ENCODE measurements at regions of chr15 and their contacts with region 1.

Region 1: DNA sequence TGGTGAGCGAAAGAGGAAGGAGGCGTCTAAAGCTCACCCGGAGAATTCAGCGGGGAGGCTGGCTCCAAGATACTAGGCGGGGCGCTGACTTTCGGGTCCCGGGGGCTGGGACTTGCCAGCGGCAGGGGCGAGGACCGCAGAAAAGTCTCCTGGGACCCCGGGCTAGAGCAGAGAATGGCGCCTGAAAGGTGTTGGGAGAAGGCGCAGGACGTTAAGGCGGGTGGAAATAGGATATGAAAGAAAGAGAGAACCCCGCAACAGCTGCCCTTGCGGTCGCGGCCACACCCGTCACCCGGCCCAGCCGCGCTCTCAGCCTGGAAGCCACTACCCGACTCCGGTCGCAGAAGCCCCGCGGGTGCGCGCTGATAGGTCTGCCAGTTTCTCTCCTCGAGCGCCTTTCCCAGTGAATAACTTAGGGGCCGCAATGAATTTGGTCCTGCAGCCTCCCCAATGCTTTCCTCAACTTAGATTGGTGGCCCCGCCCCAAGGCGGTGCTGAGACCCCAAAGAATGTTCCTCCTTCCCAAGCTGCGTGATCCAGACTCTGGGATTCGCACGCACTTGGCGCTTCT is 602 bp downstream of the LTK start:
- DNase-seq: peak; percentile 76
- ATAC-seq: peak; percentile 73
- H3K4me3 ChIP-seq: peak overlapping the region; percentile 34 to 76 (median 51)
- H3K4me3 Mint-ChIP-seq: peak overlapping the region; percentile 88
- H3K27ac ChIP-seq: no peak overlapping the region
- H3K27ac Mint-ChIP-seq: peak overlapping the region; percentile 71
- H3K4me1 ChIP-seq: peaks cover 30% of the 10 kb centered on the region in 2 donors
- H3K4me1 Mint-ChIP-seq: peaks cover 27% of the 10 kb centered on the region
- H3K27me3 ChIP-seq: peaks cover 0 to 27% (median 11%) of the 10 kb centered on the region in 4 experiments
- H3K27me3 Mint-ChIP-seq: peaks cover 6% of the 10 kb centered on the region
- CTCF ChIP-seq: no peak

Region 2: GRCh38 chr15:41501191-41501917 is 11.7 kb before region 1 on chr15:
- CTCF ChIA-PET with region 1: interaction called, 3 read pairs
- POLR2A ChIA-PET with region 1: interaction called, 3 read pairs
- intact Hi-C with region 1: loop called (anchors 1 kb)
- DNase-seq: peak; percentile 57
- ATAC-seq: peak; percentile 42
- H3K4me3 ChIP-seq: peak overlapping the region in 4 of 5 experiments; percentile 31 to 62 (median 48)
- H3K4me3 Mint-ChIP-seq: peak overlapping the region; percentile 87
- H3K27ac ChIP-seq: no peak overlapping the region
- H3K27ac Mint-ChIP-seq: peak overlapping the region; percentile 43
- H3K4me1 ChIP-seq: peaks cover 35 to 43% of the 10 kb centered on the region in 2 donors
- H3K4me1 Mint-ChIP-seq: peaks cover 38% of the 10 kb centered on the region
- H3K27me3 ChIP-seq: peaks cover 0 to 66% (median 36%) of the 10 kb centered on the region in 4 experiments
- H3K27me3 Mint-ChIP-seq: peaks cover 43% of the 10 kb centered on the region
- CTCF ChIP-seq: no peak

Region 3: DNA sequence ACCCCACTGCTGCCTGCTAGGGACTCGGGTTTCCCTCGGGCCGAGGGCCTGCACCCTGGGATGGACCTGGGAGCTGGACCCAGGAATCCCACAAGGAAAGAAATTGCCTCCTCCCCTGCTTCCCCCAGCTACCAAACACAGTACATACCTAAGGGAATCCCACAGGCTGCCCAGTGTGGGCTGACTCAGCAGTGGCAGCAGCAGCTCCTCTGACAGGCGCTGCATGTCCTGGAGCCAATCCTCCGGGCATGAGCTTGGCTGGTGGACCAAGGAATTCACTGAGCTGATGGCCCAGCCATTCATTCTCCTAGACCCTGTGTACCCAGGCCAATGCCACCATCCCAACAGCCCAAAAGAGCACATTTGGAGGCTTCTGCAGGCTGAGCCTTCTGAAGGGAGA is 10.1 kb after region 1 on chr15:
- CTCF ChIA-PET with region 1: interaction called, 3 read pairs
- POLR2A ChIA-PET with region 1: interaction called, 10 read pairs
- intact Hi-C with region 1: no loop called
- DNase-seq: no peak
- ATAC-seq: no peak
- H3K4me3 ChIP-seq: no peak overlapping the region
- H3K4me3 Mint-ChIP-seq: no peak overlapping the region
- H3K27ac ChIP-seq: no peak overlapping the region
- H3K27ac Mint-ChIP-seq: no peak overlapping the region
- H3K4me1 ChIP-seq: no peaks in the 10 kb centered on the region
- H3K4me1 Mint-ChIP-seq: no peaks in the 10 kb centered on the region
- H3K27me3 ChIP-seq: no peaks in the 10 kb centered on the region
- H3K27me3 Mint-ChIP-seq: no peaks in the 10 kb centered on the region
- CTCF ChIP-seq: no peak

Region 4: DNA sequence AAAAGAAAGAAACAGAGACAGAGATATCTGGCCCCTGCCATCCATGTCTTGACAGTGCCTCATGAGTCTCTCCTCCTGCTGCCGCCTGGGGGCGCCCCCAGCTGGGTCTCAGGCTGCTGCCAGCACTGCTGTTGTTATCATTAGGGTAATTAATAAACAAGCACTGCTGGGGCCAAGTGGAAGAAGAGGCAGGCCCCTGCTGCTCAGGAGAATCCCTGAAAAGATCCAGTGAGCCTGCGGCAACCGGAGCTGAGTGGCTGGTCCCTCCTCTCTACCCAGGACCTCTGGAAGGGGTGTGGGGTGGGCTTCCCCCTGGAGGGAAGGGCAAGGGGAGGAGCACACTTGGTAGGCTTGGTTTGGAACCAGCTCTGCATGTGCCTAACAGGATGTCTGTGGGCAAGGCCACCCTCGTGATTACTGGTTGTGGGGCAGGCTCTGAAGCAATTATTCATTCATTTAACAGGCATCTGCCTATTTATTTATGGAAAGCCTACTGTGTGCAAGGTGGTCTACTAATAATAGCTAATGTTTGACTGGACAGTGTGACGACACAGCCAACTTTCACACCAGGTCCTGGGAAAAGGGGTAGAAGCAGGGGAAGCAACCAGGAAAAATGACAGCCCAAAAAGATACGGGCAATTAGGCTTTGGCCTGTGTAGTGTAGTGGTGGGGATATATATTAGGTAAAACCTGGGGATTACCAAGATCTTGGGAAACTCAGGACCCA is 44.8 kb after region 1 on chr15:
- CTCF ChIA-PET with region 1: no interaction called
- POLR2A ChIA-PET with region 1: no interaction called
- intact Hi-C with region 1: no loop called
- DNase-seq: peak; percentile 77
- ATAC-seq: peak; percentile 53
- H3K4me3 ChIP-seq: peak overlapping the region in 2 of 5 experiments; percentile 43 to 65
- H3K4me3 Mint-ChIP-seq: peak overlapping the region; percentile 87
- H3K27ac ChIP-seq: no peak overlapping the region
- H3K27ac Mint-ChIP-seq: no peak overlapping the region
- H3K4me1 ChIP-seq: peaks cover 20 to 25% of the 10 kb centered on the region in 2 donors
- H3K4me1 Mint-ChIP-seq: peaks cover 24% of the 10 kb centered on the region
- H3K27me3 ChIP-seq: peaks cover 0 to 46% (median 15%) of the 10 kb centered on the region in 4 experiments
- H3K27me3 Mint-ChIP-seq: peaks cover 38% of the 10 kb centered on the region
- CTCF ChIP-seq: peak; percentile 89

Region 5: GRCh38 chr15:41575282-41575681 is 62.3 kb after region 1 on chr15:
- CTCF ChIA-PET with region 1: no interaction called
- POLR2A ChIA-PET with region 1: no interaction called
- intact Hi-C with region 1: no loop called
- DNase-seq: no peak
- ATAC-seq: no peak
- H3K4me3 ChIP-seq: no peak overlapping the region
- H3K4me3 Mint-ChIP-seq: no peak overlapping the region
- H3K27ac ChIP-seq: no peak overlapping the region
- H3K27ac Mint-ChIP-seq: no peak overlapping the region
- H3K4me1 ChIP-seq: no peaks in the 10 kb centered on the region
- H3K4me1 Mint-ChIP-seq: no peaks in the 10 kb centered on the region
- H3K27me3 ChIP-seq: no peaks in the 10 kb centered on the region
- H3K27me3 Mint-ChIP-seq: peaks cover 15% of the 10 kb centered on the region
- CTCF ChIP-seq: no peak

Measured in B cell (primary cell).